ENCODE measurements at regions of chr4 and their contacts with region 1.

Region 1: DNA sequence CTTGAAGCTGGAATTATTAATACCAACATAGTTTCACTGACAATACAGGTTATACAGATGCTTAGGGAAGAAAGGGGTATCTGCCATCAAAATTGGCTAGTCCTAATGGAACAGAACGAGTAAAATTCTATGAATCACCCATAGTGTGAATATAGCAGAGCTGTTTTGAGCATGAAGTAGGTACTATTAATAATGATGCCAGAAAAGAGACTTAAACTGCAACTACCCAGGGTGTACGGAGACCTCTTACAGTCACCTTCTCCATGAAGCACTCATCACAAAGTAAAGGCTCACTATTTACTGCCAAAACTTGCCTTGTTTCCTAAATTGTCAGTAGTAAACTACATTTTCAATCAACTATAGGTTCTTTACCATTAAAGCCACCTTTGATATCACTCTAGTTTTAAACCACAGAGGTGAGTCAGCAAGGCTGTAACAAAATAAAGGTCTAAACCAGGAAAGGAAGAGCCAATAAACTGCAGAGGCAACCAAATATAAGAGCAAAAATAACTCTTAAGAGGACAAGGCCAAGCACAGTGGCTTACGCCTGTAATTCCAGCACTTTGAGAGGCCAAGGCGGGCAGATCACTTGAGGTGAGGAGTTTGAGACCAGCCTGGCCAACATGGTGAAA is 114.4 kb downstream of the FRYL start:
- DNase-seq: peak; percentile 65
- H3K4me3 ChIP-seq: peak overlapping the region in 1 of 3 experiments; percentile 8
- H3K27ac ChIP-seq: peak overlapping the region; percentile 11
- H3K4me1 ChIP-seq: peaks cover 40% of the 10 kb centered on the region
- H3K27me3 ChIP-seq: no peaks in the 10 kb centered on the region
- CTCF ChIP-seq: no peak

Region 2: DNA sequence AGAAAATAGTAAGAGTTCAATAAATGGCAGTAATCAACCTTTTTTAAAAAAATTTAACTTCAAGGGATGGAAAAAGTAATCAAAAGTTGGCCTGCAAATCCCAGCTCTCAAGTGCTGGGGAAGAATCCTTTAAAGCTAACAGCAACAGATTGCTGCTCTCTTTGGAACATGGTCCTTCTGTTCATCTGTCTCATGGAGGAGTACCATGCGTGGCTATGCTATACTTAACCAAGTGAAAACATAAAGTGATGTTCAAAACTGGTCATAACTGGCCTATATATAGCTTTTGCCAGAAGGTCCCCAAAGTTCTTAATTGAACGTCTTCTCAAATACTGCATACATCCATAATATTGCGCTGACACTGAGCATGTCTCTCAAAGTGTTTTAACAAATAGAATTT is 1479.9 kb before region 1 on chr4:
- CTCF ChIA-PET with region 1: interaction called, 12 read pairs
- dilution Hi-C with region 1: no loop called
- in situ Hi-C with region 1: no loop called
- intact Hi-C with region 1: no loop called
- DNase-seq: no peak
- H3K4me3 ChIP-seq: no peak overlapping the region
- H3K27ac ChIP-seq: no peak overlapping the region
- H3K4me1 ChIP-seq: no peaks in the 10 kb centered on the region
- H3K27me3 ChIP-seq: peaks cover 3% of the 10 kb centered on the region
- CTCF ChIP-seq: no peak

Region 3: GRCh38 chr4:48688953-48689352 is 23.3 kb after region 1 on chr4:
- CTCF ChIA-PET with region 1: no interaction called
- dilution Hi-C with region 1: no loop called
- in situ Hi-C with region 1: no loop called
- intact Hi-C with region 1: no loop called
- DNase-seq: no peak
- H3K4me3 ChIP-seq: no peak overlapping the region
- H3K27ac ChIP-seq: no peak overlapping the region
- H3K4me1 ChIP-seq: no peaks in the 10 kb centered on the region
- H3K27me3 ChIP-seq: no peaks in the 10 kb centered on the region
- CTCF ChIP-seq: no peak

Region 4: GRCh38 chr4:48792348-48793006 is 126.8 kb after region 1 on chr4:
- CTCF ChIA-PET with region 1: no interaction called
- dilution Hi-C with region 1: no loop called
- in situ Hi-C with region 1: no loop called
- intact Hi-C with region 1: no loop called
- DNase-seq: no peak
- H3K4me3 ChIP-seq: no peak overlapping the region
- H3K27ac ChIP-seq: no peak overlapping the region
- H3K4me1 ChIP-seq: no peaks in the 10 kb centered on the region
- H3K27me3 ChIP-seq: no peaks in the 10 kb centered on the region
- CTCF ChIP-seq: no peak

Region 5: DNA sequence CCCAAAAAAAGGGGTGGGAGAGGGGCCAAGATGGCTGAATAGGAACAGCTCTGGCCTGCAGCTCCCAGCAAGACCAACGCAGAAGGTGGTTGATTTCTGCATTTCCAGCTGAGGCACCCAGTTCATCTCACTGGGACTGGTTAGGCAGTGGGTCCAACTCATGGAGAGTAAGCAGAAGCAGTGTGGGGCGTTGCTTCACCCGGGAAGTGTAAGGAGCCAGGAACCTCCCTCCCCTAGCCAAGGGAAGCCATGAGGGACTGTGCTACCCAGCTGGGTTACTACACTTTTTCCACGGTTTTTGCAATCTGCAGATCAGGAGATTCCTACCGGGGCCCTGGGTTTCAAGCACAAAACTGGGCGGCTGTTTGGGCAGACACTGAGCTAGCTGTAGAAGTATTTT is 151.3 kb after region 1 on chr4:
- CTCF ChIA-PET with region 1: no interaction called
- dilution Hi-C with region 1: no loop called
- in situ Hi-C with region 1: no loop called
- intact Hi-C with region 1: no loop called
- DNase-seq: no peak
- H3K4me3 ChIP-seq: no peak overlapping the region
- H3K27ac ChIP-seq: no peak overlapping the region
- H3K4me1 ChIP-seq: no peaks in the 10 kb centered on the region
- H3K27me3 ChIP-seq: no peaks in the 10 kb centered on the region
- CTCF ChIP-seq: no peak

Measured in mammary epithelial cell (primary cell).